ENCODE measurements at regions of chr2 and their contacts with region 1.

Region 1: GRCh38 chr2:189370719-189371118 is 70.6 kb upstream of the WDR75 start:
- DNase-seq: peak; percentile 79
- H3K4me3 ChIP-seq: peak overlapping the region in 1 of 3 experiments; percentile 35
- H3K27ac ChIP-seq: peak overlapping the region; percentile 88
- H3K4me1 ChIP-seq: peaks cover 40% of the 10 kb centered on the region
- H3K27me3 ChIP-seq: no peaks in the 10 kb centered on the region
- CTCF ChIP-seq: no peak
- POLR2A ChIP-seq: no peak

Region 2: DNA sequence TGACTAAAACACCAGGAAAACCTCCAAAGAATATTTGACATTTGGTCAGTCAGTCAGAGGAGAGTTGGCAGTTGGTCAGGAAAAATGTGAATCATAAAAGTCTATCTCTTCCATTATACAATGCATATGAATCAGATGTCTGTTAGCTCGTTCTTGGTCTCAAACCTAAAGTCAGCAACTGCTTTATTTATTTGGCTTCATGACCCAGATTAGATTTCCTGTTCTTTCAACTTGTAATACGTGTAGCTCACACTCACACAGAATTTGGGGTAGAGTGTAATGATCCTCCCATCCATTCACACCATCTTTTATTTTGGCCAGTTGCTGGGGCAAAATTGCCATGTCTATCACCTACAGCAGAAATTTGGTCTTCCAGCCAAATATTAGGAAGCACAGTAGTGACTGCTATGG is 109.3 kb before region 1 on chr2:
- CTCF ChIA-PET with region 1: no interaction called
- POLR2A ChIA-PET with region 1: no interaction called
- dilution Hi-C with region 1: no loop called
- intact Hi-C with region 1: no loop called
- DNase-seq: peak; percentile 95
- H3K4me3 ChIP-seq: no peak overlapping the region
- H3K27ac ChIP-seq: peak overlapping the region; percentile 28
- H3K4me1 ChIP-seq: peaks cover 9% of the 10 kb centered on the region
- H3K27me3 ChIP-seq: no peaks in the 10 kb centered on the region
- CTCF ChIP-seq: no peak
- POLR2A ChIP-seq: no peak

Region 3: GRCh38 chr2:189393440-189394111 is 22.9 kb after region 1 on chr2:
- CTCF ChIA-PET with region 1: interaction called, 3 read pairs
- POLR2A ChIA-PET with region 1: no interaction called
- dilution Hi-C with region 1: no loop called
- intact Hi-C with region 1: loop called (anchors 1 kb)
- DNase-seq: peak; percentile 51
- H3K4me3 ChIP-seq: no peak overlapping the region
- H3K27ac ChIP-seq: no peak overlapping the region
- H3K4me1 ChIP-seq: no peaks in the 10 kb centered on the region
- H3K27me3 ChIP-seq: no peaks in the 10 kb centered on the region
- CTCF ChIP-seq: no peak
- POLR2A ChIP-seq: no peak